A673 (cell line): ENCODE measurements at regions of chr14 and their contacts with region 1.

Region 1: GRCh38 chr14:57066887-57067513 is 201.7 kb downstream of the EXOC5 start:
- DNase-seq: peak; percentile 94
- H3K4me3 ChIP-seq: peak overlapping the region; percentile 3
- H3K27ac ChIP-seq: peak overlapping the region; percentile 75
- H3K4me1 ChIP-seq: peaks cover 86% of the 10 kb centered on the region
- H3K27me3 ChIP-seq: no peaks in the 10 kb centered on the region
- CTCF ChIP-seq: peak; percentile 96

Region 2: DNA sequence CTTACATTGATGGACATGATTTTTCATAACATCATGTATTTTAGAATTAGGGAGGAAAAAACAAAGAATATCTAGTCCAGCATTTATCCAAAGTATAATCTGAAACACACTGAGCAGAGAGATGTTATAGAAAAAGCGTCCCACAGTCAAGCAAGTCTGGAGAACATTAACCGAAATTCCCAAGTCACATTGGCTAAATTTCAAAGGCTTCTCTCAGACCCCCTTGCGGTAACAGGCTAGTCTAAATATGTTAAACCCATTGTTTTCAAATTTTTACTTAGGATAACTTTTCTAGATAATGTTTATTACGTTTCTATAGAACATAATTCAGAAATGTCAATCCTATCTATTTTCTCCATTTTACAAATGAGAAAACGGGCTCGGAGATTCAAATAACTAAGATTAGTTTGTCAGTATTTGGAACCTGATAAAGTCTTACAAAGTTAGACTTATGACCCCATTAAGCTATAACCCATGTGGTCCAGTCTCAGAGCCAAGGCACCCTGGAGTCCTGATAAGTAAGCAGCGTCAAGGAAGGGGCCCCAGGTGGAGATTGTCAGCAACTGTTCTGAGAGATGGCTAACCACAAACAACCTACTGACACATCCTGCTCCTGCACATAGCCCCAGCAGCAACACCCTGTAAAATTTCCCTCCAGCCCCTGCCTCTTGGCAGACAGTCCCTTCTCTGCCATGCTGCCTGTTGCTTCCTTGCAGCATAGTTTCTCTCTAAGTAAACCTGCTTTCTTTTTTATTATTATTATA is 708.0 kb before region 1 on chr14:
- CTCF ChIA-PET with region 1: no interaction called
- POLR2A ChIA-PET with region 1: no interaction called
- intact Hi-C with region 1: no loop called
- DNase-seq: no peak
- H3K4me3 ChIP-seq: no peak overlapping the region
- H3K27ac ChIP-seq: no peak overlapping the region
- H3K4me1 ChIP-seq: no peaks in the 10 kb centered on the region
- H3K27me3 ChIP-seq: no peaks in the 10 kb centered on the region
- CTCF ChIP-seq: no peak

Region 3: GRCh38 chr14:56555921-56556570 is 511.0 kb before region 1 on chr14:
- CTCF ChIA-PET with region 1: no interaction called
- POLR2A ChIA-PET with region 1: interaction called, 3 read pairs
- intact Hi-C with region 1: loop called (anchors 5 kb)
- DNase-seq: peak; percentile 81
- H3K4me3 ChIP-seq: no peak overlapping the region
- H3K27ac ChIP-seq: peak overlapping the region; percentile 48
- H3K4me1 ChIP-seq: peaks cover 44% of the 10 kb centered on the region
- H3K27me3 ChIP-seq: no peaks in the 10 kb centered on the region
- CTCF ChIP-seq: peak; percentile 85

Region 4: DNA sequence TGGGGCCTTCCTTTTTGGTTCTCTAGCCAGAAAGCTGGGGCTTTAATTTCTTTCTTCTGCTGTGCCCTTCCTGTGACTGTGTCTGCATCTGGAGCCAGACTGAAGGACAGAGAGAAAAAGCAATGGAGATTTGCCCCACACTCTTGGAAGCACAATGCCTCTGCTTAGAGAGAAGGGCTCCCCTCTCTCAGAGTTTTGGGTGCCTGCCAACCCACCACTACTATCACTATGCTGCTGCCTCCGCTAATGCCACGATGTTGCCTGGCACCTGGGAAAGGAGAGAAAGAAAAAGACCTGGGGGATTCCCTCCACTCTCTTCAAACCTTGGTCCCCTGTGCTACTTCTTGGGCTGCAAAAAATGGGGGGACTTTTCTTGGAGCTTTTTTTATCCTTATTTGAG is 434.8 kb before region 1 on chr14:
- CTCF ChIA-PET with region 1: no interaction called
- POLR2A ChIA-PET with region 1: no interaction called
- intact Hi-C with region 1: no loop called
- DNase-seq: no peak
- H3K4me3 ChIP-seq: no peak overlapping the region
- H3K27ac ChIP-seq: no peak overlapping the region
- H3K4me1 ChIP-seq: no peaks in the 10 kb centered on the region
- H3K27me3 ChIP-seq: no peaks in the 10 kb centered on the region
- CTCF ChIP-seq: no peak

Region 5: GRCh38 chr14:56659964-56660551 is 406.9 kb before region 1 on chr14:
- CTCF ChIA-PET with region 1: no interaction called
- POLR2A ChIA-PET with region 1: no interaction called
- intact Hi-C with region 1: loop called (anchors 1 kb)
- DNase-seq: peak; percentile 90
- H3K4me3 ChIP-seq: peak overlapping the region; percentile 29
- H3K27ac ChIP-seq: peak overlapping the region; percentile 84
- H3K4me1 ChIP-seq: peaks cover 25% of the 10 kb centered on the region
- H3K27me3 ChIP-seq: no peaks in the 10 kb centered on the region
- CTCF ChIP-seq: peak; percentile 94

Region 6: GRCh38 chr14:56808383-56809269 is 258.4 kb before region 1 on chr14:
- CTCF ChIA-PET with region 1: no interaction called
- POLR2A ChIA-PET with region 1: no interaction called
- intact Hi-C with region 1: loop called (anchors 5 kb)
- DNase-seq: peak; percentile 75
- H3K4me3 ChIP-seq: peak overlapping the region; percentile 71
- H3K27ac ChIP-seq: peak overlapping the region; percentile 95
- H3K4me1 ChIP-seq: peaks cover 2% of the 10 kb centered on the region
- H3K27me3 ChIP-seq: no peaks in the 10 kb centered on the region
- CTCF ChIP-seq: no peak

Region 7: GRCh38 chr14:57153276-57153675 is 86.3 kb after region 1 on chr14:
- CTCF ChIA-PET with region 1: no interaction called
- POLR2A ChIA-PET with region 1: no interaction called
- intact Hi-C with region 1: no loop called
- DNase-seq: no peak
- H3K4me3 ChIP-seq: no peak overlapping the region
- H3K27ac ChIP-seq: no peak overlapping the region
- H3K4me1 ChIP-seq: no peaks in the 10 kb centered on the region
- H3K27me3 ChIP-seq: no peaks in the 10 kb centered on the region
- CTCF ChIP-seq: no peak

Region 8: DNA sequence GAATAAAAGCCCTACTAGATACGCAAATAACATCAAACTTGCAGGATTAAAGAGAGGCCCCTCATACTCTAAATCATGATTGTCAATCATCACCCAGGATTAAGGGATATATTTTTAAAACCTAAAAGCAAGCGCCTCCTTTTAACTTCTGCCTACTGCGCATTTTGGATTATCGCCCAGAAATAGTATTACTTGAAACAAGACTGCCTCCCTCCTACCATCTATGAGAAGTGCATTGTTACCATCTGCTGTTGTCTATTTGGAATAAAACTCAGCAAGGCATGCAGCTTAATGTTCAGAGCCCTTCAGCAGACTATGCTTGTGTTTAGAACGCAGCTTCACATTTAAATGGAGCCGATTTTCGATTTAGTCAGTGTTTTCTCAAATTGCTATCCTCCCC is 122.1 kb after region 1 on chr14:
- CTCF ChIA-PET with region 1: no interaction called
- POLR2A ChIA-PET with region 1: no interaction called
- intact Hi-C with region 1: loop called (anchors 5 kb)
- DNase-seq: peak; percentile 90
- H3K4me3 ChIP-seq: no peak overlapping the region
- H3K27ac ChIP-seq: no peak overlapping the region
- H3K4me1 ChIP-seq: peaks cover 21% of the 10 kb centered on the region
- H3K27me3 ChIP-seq: no peaks in the 10 kb centered on the region
- CTCF ChIP-seq: peak; percentile 77

Region 9: GRCh38 chr14:57378669-57379068 is 311.7 kb after region 1 on chr14:
- CTCF ChIA-PET with region 1: no interaction called
- POLR2A ChIA-PET with region 1: no interaction called
- intact Hi-C with region 1: loop called (anchors 10 kb)
- DNase-seq: peak; percentile 27
- H3K4me3 ChIP-seq: no peak overlapping the region
- H3K27ac ChIP-seq: no peak overlapping the region
- H3K4me1 ChIP-seq: peaks cover 14% of the 10 kb centered on the region
- H3K27me3 ChIP-seq: no peaks in the 10 kb centered on the region
- CTCF ChIP-seq: peak; percentile 49; the same call in 1 of the 2 replicates

Region 10: DNA sequence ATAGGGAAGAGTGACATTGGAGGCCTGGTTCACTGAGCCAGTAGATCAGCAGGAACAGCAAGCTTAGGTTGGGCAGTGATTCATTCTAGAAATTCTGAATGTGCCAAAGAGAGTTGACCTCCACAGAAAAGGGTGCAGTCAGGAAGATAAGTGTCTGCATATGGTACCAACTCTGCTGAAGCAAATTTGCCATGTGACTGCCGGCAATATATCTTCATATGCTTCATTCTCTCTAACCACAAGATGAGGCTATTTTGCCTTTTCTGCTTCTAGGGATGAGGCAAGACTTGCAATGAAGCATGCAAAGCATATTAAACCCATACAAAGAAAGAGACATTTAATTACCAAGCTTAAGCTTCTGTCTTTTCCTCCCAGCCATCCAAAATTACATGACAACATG is 413.1 kb after region 1 on chr14:
- CTCF ChIA-PET with region 1: no interaction called
- POLR2A ChIA-PET with region 1: no interaction called
- intact Hi-C with region 1: no loop called
- DNase-seq: peak; percentile 91
- H3K4me3 ChIP-seq: no peak overlapping the region
- H3K27ac ChIP-seq: no peak overlapping the region
- H3K4me1 ChIP-seq: peaks cover 20% of the 10 kb centered on the region
- H3K27me3 ChIP-seq: no peaks in the 10 kb centered on the region
- CTCF ChIP-seq: peak; percentile 49